ENCODE measurements at regions of chr20 and their contacts with region 1.

Region 1: GRCh38 chr20:45436732-45437391 is 20.9 kb downstream of the PIGT start:
- DNase-seq: no peak
- H3K4me3 ChIP-seq: peak overlapping the region; percentile 45
- H3K27me3 ChIP-seq: no peaks in the 10 kb centered on the region
- CTCF ChIP-seq: peak; percentile 96

Region 2: DNA sequence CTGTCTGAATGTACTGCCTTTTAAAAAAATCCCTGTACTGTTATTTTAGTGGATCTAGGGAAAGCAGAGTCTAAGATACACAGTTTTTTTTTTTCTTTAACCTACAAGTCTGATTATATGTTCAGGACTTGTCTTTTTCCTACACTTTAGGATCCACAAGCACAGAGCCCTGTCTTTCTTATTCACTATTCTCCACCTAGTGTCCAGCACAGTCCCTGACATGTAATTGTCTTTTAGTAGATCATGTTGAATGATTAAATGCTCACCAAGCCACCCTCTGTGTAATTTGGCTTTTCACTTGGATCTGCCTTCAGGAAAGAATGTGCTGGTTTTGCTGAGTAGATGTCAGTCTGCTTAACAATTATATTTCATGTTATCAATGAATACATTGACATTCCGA is 587.2 kb before region 1 on chr20:
- CTCF ChIA-PET with region 1: no interaction called
- POLR2A ChIA-PET with region 1: no interaction called
- DNase-seq: no peak
- H3K4me3 ChIP-seq: no peak overlapping the region
- H3K27me3 ChIP-seq: peaks cover 2% of the 10 kb centered on the region; the same call in 1 of the 2 replicates
- CTCF ChIP-seq: no peak

Region 3: GRCh38 chr20:45293041-45294002 is 143.5 kb before region 1 on chr20:
- CTCF ChIA-PET with region 1: interaction called, 10 read pairs
- POLR2A ChIA-PET with region 1: no interaction called
- DNase-seq: no peak
- H3K4me3 ChIP-seq: peak overlapping the region; percentile 51
- H3K27me3 ChIP-seq: no peaks in the 10 kb centered on the region; the same call in 1 of the 2 replicates
- CTCF ChIP-seq: peak; percentile 99

Region 4: DNA sequence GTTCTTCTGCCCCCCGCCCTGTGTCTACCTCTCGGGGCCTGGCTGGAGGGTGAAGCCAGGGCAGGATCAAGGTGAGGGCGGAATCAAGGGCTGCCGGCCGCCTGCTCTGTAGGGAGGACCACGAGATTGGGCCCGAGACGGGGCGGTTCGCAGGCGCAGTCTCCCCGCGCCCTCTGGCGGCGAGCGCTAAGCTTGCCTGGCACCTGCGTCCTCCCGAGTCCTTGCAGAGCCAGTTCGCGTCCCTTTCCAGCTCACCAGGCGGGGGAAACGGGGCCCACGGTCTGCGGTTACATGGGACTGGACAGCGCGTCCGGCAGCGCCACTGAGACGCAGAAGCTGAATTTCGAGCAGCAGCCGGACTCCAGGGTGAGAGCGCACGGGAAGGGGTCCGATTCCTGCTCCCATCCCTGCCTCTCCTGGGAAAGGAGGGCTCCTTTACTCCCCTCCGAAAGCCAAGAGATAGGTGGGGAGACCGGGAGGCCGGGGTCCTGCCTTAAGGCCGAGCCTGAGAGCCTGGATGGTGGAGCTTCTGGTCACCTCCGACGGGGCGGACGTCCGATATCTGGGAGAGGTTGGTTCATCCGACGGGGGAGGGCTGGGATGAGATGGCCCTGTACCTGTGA is 125.2 kb before region 1 on chr20:
- CTCF ChIA-PET with region 1: interaction called, 193 read pairs
- POLR2A ChIA-PET with region 1: no interaction called
- DNase-seq: no peak
- H3K4me3 ChIP-seq: no peak overlapping the region
- H3K27me3 ChIP-seq: peaks cover 12% of the 10 kb centered on the region
- CTCF ChIP-seq: peak; percentile 92

Region 5: DNA sequence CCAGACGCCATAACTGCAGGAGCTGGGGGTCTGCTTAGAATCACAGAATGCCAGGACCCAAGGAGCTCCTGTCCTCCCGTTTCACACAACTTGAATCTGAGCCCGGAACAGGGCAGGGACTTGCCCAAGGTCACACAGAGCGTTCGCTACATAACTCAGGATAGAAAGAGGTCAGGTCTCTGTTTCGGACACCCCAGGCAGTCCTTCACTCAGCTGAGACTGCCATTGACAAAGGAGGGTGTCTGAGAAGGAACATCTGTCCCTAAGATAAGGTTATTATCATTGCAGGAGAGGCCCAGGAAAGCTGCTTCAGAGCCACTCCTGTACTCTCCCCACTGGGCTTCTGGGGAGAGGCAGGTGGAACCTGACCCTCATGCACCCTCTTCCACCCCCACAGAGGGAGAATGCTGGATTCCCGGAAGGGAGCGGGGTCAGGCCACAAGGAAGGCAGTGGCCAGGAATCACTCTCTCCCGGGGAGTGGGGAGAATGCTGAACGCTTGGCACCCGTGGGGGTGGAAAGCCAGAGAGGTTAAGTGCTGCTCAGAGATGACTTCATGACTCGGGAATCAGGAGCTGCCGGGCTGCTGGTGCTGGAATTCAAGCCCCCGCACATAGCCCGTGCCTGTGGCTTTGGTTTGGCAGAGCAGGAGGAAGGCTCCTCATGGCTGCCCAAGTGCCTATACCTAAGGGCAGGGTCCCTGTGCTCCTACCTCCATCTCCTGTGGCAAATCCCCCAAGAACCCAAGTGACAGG is 99.3 kb before region 1 on chr20:
- CTCF ChIA-PET with region 1: interaction called, 12 read pairs
- POLR2A ChIA-PET with region 1: no interaction called
- DNase-seq: peak; percentile 83
- H3K4me3 ChIP-seq: no peak overlapping the region
- H3K27me3 ChIP-seq: no peaks in the 10 kb centered on the region
- CTCF ChIP-seq: no peak

Region 6: GRCh38 chr20:45373353-45374100 is 63.3 kb before region 1 on chr20:
- CTCF ChIA-PET with region 1: interaction called, 101 read pairs
- POLR2A ChIA-PET with region 1: no interaction called
- DNase-seq: no peak
- H3K4me3 ChIP-seq: peak overlapping the region; percentile 33
- H3K27me3 ChIP-seq: no peaks in the 10 kb centered on the region
- CTCF ChIP-seq: peak; percentile 94

Region 7: DNA sequence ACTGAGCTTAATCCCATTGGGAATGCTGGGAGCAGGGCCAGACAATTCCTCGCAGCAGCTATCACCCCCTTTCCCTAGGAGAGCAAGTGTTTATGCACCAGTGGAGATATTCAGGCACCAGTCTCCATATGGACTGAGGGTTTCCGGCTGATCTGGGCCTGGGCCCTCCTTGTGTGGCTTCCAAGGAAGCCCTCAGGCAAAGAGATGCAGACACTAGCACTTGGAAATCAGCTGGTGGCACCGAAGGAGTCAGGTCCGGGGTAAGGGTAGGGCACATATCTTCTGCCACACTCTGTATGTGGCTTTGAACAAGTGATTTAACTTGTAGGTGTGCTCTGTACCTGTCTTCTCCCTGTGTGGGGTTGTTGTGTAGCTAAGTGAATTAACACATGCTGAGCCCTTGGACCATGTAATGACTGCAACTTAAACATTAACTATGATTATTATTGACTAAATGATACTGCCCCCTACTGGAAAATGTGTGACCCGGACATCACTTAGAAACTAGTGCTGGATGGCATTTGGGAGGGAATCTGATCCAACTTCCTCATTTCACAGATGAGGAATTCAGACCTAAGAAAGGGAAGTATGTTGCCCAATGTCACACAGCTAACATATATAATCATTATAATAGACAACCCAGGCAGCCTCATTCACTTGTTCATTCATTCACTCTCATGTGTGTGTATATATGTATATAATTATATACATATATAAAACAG is 13.4 kb after region 1 on chr20:
- CTCF ChIA-PET with region 1: interaction called, 39 read pairs
- POLR2A ChIA-PET with region 1: no interaction called
- DNase-seq: no peak
- H3K4me3 ChIP-seq: no peak overlapping the region
- H3K27me3 ChIP-seq: peaks cover 8% of the 10 kb centered on the region
- CTCF ChIP-seq: peak; percentile 55

Region 8: GRCh38 chr20:45685896-45686295 is 249.0 kb after region 1 on chr20:
- CTCF ChIA-PET with region 1: no interaction called
- POLR2A ChIA-PET with region 1: no interaction called
- DNase-seq: no peak
- H3K4me3 ChIP-seq: no peak overlapping the region
- H3K27me3 ChIP-seq: no peaks in the 10 kb centered on the region
- CTCF ChIP-seq: no peak; the same call in 1 of the 2 replicates

Region 9: GRCh38 chr20:46674253-46675083 is 1237.6 kb after region 1 on chr20:
- CTCF ChIA-PET with region 1: no interaction called
- POLR2A ChIA-PET with region 1: no interaction called
- DNase-seq: no peak
- H3K4me3 ChIP-seq: no peak overlapping the region
- H3K27me3 ChIP-seq: no peaks in the 10 kb centered on the region
- CTCF ChIP-seq: no peak